ENCODE measurements at regions of chr15 and their contacts with region 1.

Region 1: GRCh38 chr15:29815000-29815710 is 7.1 kb downstream of the TJP1 start:
- DNase-seq: peak; percentile 63
- ATAC-seq: peak; percentile 66
- H3K4me3 ChIP-seq: peak overlapping the region; percentile 32; the same call in 1 of the 2 replicates
- H3K27ac ChIP-seq: no peak overlapping the region
- H3K4me1 ChIP-seq: peaks cover 73% of the 10 kb centered on the region
- H3K27me3 ChIP-seq: no peaks in the 10 kb centered on the region
- CTCF ChIP-seq: no peak

Region 2: GRCh38 chr15:29747837-29748417 is 67.2 kb before region 1 on chr15:
- CTCF ChIA-PET with region 1: interaction called, 4 read pairs
- POLR2A ChIA-PET with region 1: no interaction called
- intact Hi-C with region 1: loop called (anchors 2 kb)
- DNase-seq: peak; percentile 64
- ATAC-seq: peak; percentile 42; the same call in 1 of the 2 replicates
- H3K4me3 ChIP-seq: no peak overlapping the region
- H3K27ac ChIP-seq: no peak overlapping the region
- H3K4me1 ChIP-seq: no peaks in the 10 kb centered on the region
- H3K27me3 ChIP-seq: no peaks in the 10 kb centered on the region
- CTCF ChIP-seq: peak; percentile 71

Region 3: DNA sequence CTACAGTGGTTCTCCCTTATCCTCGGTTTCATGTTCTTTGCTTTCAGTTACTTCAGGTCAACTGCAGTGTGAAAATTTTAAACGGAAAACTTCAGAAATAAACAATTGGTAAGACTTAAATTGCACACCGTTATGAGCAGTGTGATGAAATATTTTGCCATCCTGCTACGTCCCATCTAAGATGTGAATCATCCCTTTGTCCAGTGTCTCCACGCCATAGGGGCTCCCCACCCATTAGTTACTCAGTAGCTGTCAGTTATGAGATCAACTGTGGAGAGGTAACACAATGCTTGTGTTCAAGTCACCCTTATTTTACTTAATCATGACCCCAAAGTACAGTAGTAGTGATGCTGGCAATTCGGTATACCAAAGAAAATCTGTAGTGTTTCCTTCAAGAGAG is 40.3 kb before region 1 on chr15:
- CTCF ChIA-PET with region 1: no interaction called
- POLR2A ChIA-PET with region 1: no interaction called
- intact Hi-C with region 1: loop called (anchors 5 kb)
- DNase-seq: peak; percentile 54
- ATAC-seq: peak; percentile 39
- H3K4me3 ChIP-seq: no peak overlapping the region
- H3K27ac ChIP-seq: no peak overlapping the region
- H3K4me1 ChIP-seq: peaks cover 34% of the 10 kb centered on the region
- H3K27me3 ChIP-seq: no peaks in the 10 kb centered on the region
- CTCF ChIP-seq: no peak

Region 4: DNA sequence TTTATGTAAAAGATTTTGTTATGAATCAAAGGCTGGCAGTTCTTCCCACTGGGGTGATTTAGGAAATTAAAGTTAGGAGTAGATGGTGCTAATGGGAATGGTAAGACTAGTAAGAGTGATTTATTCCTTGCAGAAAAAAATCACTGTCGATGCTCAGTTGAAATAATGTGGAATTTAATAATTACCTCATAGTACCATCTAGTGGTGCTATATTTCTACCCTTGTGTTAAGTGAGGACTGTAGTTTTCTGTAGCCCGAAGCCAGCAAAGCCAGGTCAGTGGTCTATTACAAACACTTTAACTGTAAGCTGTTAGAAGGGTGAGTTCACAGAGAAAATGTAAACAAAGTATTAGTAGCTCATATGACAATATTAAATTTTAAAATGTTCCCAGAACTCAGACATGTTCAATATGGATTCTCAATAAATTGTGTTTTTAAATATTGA is 228.1 kb after region 1 on chr15:
- CTCF ChIA-PET with region 1: no interaction called
- POLR2A ChIA-PET with region 1: no interaction called
- intact Hi-C with region 1: loop called (anchors 5 kb)
- DNase-seq: peak; percentile 62
- ATAC-seq: peak; percentile 75
- H3K4me3 ChIP-seq: no peak overlapping the region
- H3K27ac ChIP-seq: no peak overlapping the region
- H3K4me1 ChIP-seq: no peaks in the 10 kb centered on the region
- H3K27me3 ChIP-seq: no peaks in the 10 kb centered on the region
- CTCF ChIP-seq: peak; percentile 67

Measured in PC-3 (cell line).